ENCODE measurements at regions of chrX and their contacts with region 1.

Region 1: GRCh38 chrX:69285881-69286564 is 120.8 kb upstream of the PJA1 start:
- DNase-seq: peak in 1 of 2 experiments; percentile 44
- H3K4me3 ChIP-seq: peak overlapping the region; percentile 46; the same call in 1 of the 2 replicates
- H3K27ac ChIP-seq: no peak overlapping the region
- H3K4me1 ChIP-seq: no peaks in the 10 kb centered on the region
- H3K27me3 ChIP-seq: no peaks in the 10 kb centered on the region
- CTCF ChIP-seq: peak; percentile 84

Region 2: DNA sequence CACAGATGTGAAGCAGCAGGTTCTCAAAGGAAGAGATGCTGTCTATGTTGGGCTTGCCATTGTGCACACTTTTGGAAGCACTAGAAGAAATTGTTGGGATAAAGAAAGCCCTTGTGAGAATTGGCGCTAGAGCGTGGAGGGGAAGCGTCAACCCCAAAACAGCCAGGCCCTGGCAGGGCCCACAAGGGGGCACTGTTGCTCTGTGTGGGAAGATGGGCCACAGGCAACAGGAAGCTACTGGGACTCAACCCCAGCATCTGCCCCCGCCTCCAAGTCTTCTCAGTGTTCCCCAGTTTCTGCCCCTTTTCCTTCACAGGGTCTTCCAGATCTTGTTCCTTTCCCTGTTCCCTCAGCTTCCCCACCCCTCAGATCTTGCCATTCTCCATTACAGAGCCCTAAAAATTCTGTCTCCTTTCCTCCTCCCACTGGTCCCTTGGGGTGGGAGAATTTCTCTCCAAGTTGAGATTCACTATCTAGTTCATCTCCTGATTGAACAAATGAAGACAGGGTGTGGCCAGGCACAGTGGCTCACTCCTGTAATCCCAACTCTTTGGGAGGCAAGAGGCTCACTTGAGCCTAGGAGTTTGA is 553.0 kb before region 1 on chrX:
- CTCF ChIA-PET with region 1: no interaction called
- POLR2A ChIA-PET with region 1: no interaction called
- intact Hi-C with region 1: loop called (anchors 1 kb)
- DNase-seq: peak in 1 of 2 experiments; percentile 54
- H3K4me3 ChIP-seq: no peak overlapping the region
- H3K27ac ChIP-seq: no peak overlapping the region
- H3K4me1 ChIP-seq: no peaks in the 10 kb centered on the region
- H3K27me3 ChIP-seq: peaks cover 11% of the 10 kb centered on the region
- CTCF ChIP-seq: peak; percentile 66

Region 3: GRCh38 chrX:68822641-68823410 is 463.2 kb before region 1 on chrX:
- CTCF ChIA-PET with region 1: no interaction called
- POLR2A ChIA-PET with region 1: no interaction called
- intact Hi-C with region 1: loop called (anchors 1 kb)
- DNase-seq: no peak
- H3K4me3 ChIP-seq: no peak overlapping the region
- H3K27ac ChIP-seq: no peak overlapping the region
- H3K4me1 ChIP-seq: no peaks in the 10 kb centered on the region
- H3K27me3 ChIP-seq: no peaks in the 10 kb centered on the region
- CTCF ChIP-seq: peak; percentile 54

Region 4: GRCh38 chrX:69060631-69061408 is 225.2 kb before region 1 on chrX:
- CTCF ChIA-PET with region 1: no interaction called
- POLR2A ChIA-PET with region 1: no interaction called
- intact Hi-C with region 1: loop called (anchors 10 kb)
- DNase-seq: peak in 1 of 2 experiments; percentile 41
- H3K4me3 ChIP-seq: no peak overlapping the region
- H3K27ac ChIP-seq: no peak overlapping the region
- H3K4me1 ChIP-seq: no peaks in the 10 kb centered on the region
- H3K27me3 ChIP-seq: no peaks in the 10 kb centered on the region
- CTCF ChIP-seq: peak; percentile 54; the same call in 1 of the 2 replicates